ENCODE measurements at regions of chr5 and their contacts with region 1.

Region 1: GRCh38 chr5:137754126-137754960 is at the start of gene HNRNPA0:
- DNase-seq: peak; percentile 88
- ATAC-seq: peak; percentile 88
- H3K4me3 ChIP-seq: peak within 1 kb of the TSS; percentile 91
- H3K27ac ChIP-seq: peak within 1 kb of the TSS; percentile 96
- H3K4me1 ChIP-seq: peaks cover 28% of the 10 kb centered on the region
- H3K27me3 ChIP-seq: no peaks in the 10 kb centered on the region
- CTCF ChIP-seq: no peak
- EP300 ChIP-seq: peak in 1 of 2 experiments; percentile 100; a peak in 2 of 4 replicates
- POLR2A ChIP-seq: peak; percentile 86
- RAD21 ChIP-seq: no peak
- polyA plus RNA-seq, gene HNRNPA0: 7.3 to 8.2 TPM

Region 2: GRCh38 chr5:137622850-137623249 is 131.5 kb before region 1 on chr5:
- CTCF ChIA-PET with region 1: no interaction called
- POLR2A ChIA-PET with region 1: no interaction called
- RAD21 ChIA-PET with region 1: no interaction called
- SMC1A ChIA-PET with region 1: no interaction called
- in situ Hi-C with region 1: no loop called
- intact Hi-C with region 1: no loop called
- DNase-seq: peak; percentile 9
- ATAC-seq: peak; percentile 80
- H3K4me3 ChIP-seq: no peak overlapping the region
- H3K27ac ChIP-seq: no peak overlapping the region
- H3K4me1 ChIP-seq: peaks cover 3% of the 10 kb centered on the region
- H3K27me3 ChIP-seq: no peaks in the 10 kb centered on the region
- CTCF ChIP-seq: no peak
- EP300 ChIP-seq: no peak
- POLR2A ChIP-seq: no peak
- RAD21 ChIP-seq: no peak

Region 3: GRCh38 chr5:137730336-137730735 is 24.0 kb before region 1 on chr5:
- CTCF ChIA-PET with region 1: interaction called, 30 read pairs
- POLR2A ChIA-PET with region 1: interaction called, 4 read pairs
- RAD21 ChIA-PET with region 1: interaction called, 4 read pairs
- SMC1A ChIA-PET with region 1: interaction called, 3 read pairs
- in situ Hi-C with region 1: no loop called
- intact Hi-C with region 1: no loop called
- DNase-seq: no peak
- ATAC-seq: no peak
- H3K4me3 ChIP-seq: no peak overlapping the region; the same call in 1 of the 2 replicates
- H3K27ac ChIP-seq: no peak overlapping the region
- H3K4me1 ChIP-seq: no peaks in the 10 kb centered on the region; the same call in 1 of the 2 replicates
- H3K27me3 ChIP-seq: no peaks in the 10 kb centered on the region
- CTCF ChIP-seq: no peak
- EP300 ChIP-seq: no peak
- POLR2A ChIP-seq: no peak
- RAD21 ChIP-seq: no peak

Region 4: DNA sequence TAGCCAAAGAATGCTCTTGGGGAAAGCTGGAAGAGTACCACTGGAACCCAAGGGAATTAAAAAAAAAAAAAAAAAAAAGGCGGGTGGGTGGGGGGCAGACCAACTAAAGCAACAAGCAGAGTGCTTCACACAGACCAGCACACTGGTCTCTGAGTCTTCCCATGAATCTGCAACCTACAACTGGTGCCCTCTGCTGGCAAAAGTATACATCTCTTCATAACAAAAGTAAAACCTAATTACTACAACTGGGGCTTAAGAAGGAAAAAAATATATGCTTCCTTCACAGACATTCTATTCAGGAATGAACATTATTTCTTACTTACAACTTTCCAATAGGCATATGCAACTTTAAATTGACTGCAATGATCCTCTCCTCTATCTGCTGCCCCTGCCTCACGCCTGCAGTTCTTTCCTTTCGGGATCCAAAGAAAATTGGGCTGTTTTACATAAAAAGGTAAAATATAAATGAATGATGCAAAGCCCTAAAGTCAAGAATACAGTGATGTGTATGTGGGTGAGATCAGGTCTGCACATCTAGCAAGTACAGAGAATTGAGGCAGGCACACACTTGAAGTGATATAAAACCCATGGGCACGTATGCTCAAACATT is 11.2 kb before region 1 on chr5:
- CTCF ChIA-PET with region 1: interaction called, 56 read pairs
- POLR2A ChIA-PET with region 1: interaction called, 14 read pairs
- RAD21 ChIA-PET with region 1: interaction called, 12 read pairs
- SMC1A ChIA-PET with region 1: interaction called, 10 read pairs
- in situ Hi-C with region 1: no loop called
- intact Hi-C with region 1: no loop called
- DNase-seq: no peak
- ATAC-seq: peak; percentile 84
- H3K4me3 ChIP-seq: no peak overlapping the region
- H3K27ac ChIP-seq: no peak overlapping the region
- H3K4me1 ChIP-seq: no peaks in the 10 kb centered on the region; the same call in 1 of the 2 replicates
- H3K27me3 ChIP-seq: no peaks in the 10 kb centered on the region
- CTCF ChIP-seq: peak; percentile 59 to 79 (median 69)
- EP300 ChIP-seq: no peak
- POLR2A ChIP-seq: no peak
- RAD21 ChIP-seq: peak; percentile 82

Region 5: DNA sequence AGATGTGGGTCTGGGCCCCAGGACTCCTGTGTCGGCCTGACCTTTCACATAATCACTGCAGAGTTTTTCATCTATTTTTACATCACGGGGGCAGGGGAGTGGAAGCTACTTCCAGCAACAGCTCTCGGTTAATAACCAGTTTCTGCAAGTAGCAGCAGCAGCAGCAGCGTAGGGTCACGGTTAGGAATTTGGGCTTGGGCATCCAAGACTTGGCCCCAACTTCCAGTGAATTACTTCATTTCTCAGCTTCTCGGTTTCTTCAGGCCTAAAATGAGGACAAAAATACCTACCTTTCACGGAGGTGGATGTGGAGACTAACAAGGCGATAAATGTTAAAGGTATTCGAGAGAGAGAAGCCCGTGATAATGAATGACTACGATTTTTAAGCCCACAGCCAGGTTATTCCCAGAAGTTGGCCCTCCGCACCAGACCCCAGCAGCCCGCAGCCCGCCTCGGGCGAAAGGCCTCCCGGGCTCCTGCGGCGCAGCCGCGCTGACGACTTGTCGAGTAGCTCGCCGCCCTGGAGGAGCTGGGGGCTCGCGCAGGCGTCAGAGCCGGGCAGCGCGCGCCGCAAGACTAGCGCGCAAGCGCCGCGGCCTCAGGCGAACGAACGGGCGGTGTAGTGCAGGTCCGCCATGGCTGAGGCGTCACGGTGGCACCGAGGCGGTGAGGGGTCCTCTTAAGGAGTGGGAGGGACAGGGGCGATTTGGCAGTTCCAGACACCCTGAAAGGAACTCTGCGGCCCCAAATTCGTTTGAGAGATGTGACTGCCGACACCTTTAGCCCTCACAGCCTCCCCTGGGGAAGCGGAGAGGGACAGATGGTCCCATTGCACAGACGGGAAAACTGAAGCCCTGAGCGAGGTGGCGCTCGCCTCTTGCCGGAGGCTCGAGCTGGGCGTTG is 134.8 kb after region 1 on chr5 and contains the start of gene PKD2L2:
- CTCF ChIA-PET with region 1: interaction called, 12 read pairs
- POLR2A ChIA-PET with region 1: interaction called, 11 read pairs
- RAD21 ChIA-PET with region 1: interaction called, 11 read pairs
- SMC1A ChIA-PET with region 1: interaction called, 10 read pairs
- in situ Hi-C with region 1: no loop called
- intact Hi-C with region 1: loop called (anchors 1 kb)
- DNase-seq: peak; percentile 75
- ATAC-seq: peak; percentile 99
- H3K4me3 ChIP-seq: peak within 1 kb of the TSS; percentile 79
- H3K27ac ChIP-seq: peak within 1 kb of the TSS; percentile 84
- H3K4me1 ChIP-seq: no peaks in the 10 kb centered on the region
- H3K27me3 ChIP-seq: no peaks in the 10 kb centered on the region
- CTCF ChIP-seq: peak in 2 of 3 experiments; percentile 7 to 12; a peak in 1 of 6 replicates
- EP300 ChIP-seq: 0 out of 4 replicates have a peak, but pooled peaks of 1 of the 2 experiments have one; percentile 26
- POLR2A ChIP-seq: peak; percentile 99
- RAD21 ChIP-seq: no peak
- polyA plus RNA-seq, gene PKD2L2: 0.11 to 0.16 TPM

Region 6: GRCh38 chr5:138035605-138036537 is 281.5 kb after region 1 on chr5:
- CTCF ChIA-PET with region 1: interaction called, 4 read pairs
- POLR2A ChIA-PET with region 1: interaction called, 11 read pairs
- RAD21 ChIA-PET with region 1: interaction called, 13 read pairs
- SMC1A ChIA-PET with region 1: interaction called, 3 read pairs
- in situ Hi-C with region 1: no loop called
- intact Hi-C with region 1: loop called (anchors 5 kb)
- DNase-seq: peak; percentile 63
- ATAC-seq: peak; percentile 56
- H3K4me3 ChIP-seq: no peak overlapping the region
- H3K27ac ChIP-seq: no peak overlapping the region
- H3K4me1 ChIP-seq: peaks cover 22% of the 10 kb centered on the region
- H3K27me3 ChIP-seq: no peaks in the 10 kb centered on the region
- CTCF ChIP-seq: peak; percentile 74 to 99 (median 96)
- EP300 ChIP-seq: no peak
- POLR2A ChIP-seq: no peak
- RAD21 ChIP-seq: peak; percentile 69

Region 7: DNA sequence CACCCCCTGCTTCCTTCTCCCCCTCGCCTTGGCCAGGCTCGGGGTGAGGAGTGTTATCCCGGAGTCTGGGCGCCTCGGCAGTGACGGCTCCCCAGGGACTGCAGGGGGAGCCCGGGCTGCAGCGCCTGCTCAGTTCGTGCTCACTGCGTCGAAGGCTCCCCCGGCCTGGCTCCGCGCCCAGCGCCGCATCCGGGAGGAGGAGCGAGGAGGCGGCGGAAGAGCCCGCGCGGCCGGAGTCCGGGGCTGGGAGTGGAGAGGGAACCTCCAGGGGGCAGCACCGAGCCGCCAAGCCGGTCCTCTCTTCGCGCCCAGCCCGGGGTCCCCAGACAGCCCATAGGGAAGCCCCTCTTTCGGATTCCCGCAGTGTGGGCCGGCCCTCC is 709.7 kb after region 1 on chr5:
- CTCF ChIA-PET with region 1: no interaction called
- POLR2A ChIA-PET with region 1: no interaction called
- RAD21 ChIA-PET with region 1: no interaction called
- SMC1A ChIA-PET with region 1: no interaction called
- in situ Hi-C with region 1: no loop called
- intact Hi-C with region 1: loop called (anchors 10 kb)
- DNase-seq: peak; percentile 76
- ATAC-seq: peak; percentile 71
- H3K4me3 ChIP-seq: peak overlapping the region; percentile 80
- H3K27ac ChIP-seq: peak overlapping the region; percentile 98
- H3K4me1 ChIP-seq: peaks cover 19% of the 10 kb centered on the region
- H3K27me3 ChIP-seq: peaks cover 0 to 6% of the 10 kb centered on the region in 2 experiments; a peak in 1 of 4 replicates
- CTCF ChIP-seq: peak; percentile 79 to 81 (median 80)
- EP300 ChIP-seq: no peak
- POLR2A ChIP-seq: peak; percentile 80
- RAD21 ChIP-seq: peak; percentile 29; the same call in 1 of the 2 replicates

Measured in GM12878 (cell line).